Activated CD8-positive, alpha-beta T cell treated with anti-CD3 and anti-CD28 coated beads for 36 hours (primary cell): ENCODE measurements at regions of chrX and their contacts with region 1.

Region 1: GRCh38 chrX:19682712-19683331 is 167.5 kb upstream of the MAP3K15 start:
- DNase-seq: peak; percentile 91
- ATAC-seq: peak; percentile 76
- H3K4me3 Mint-ChIP-seq: peak overlapping the region; percentile 71
- H3K27ac Mint-ChIP-seq: peak overlapping the region; percentile 94
- H3K4me1 Mint-ChIP-seq: peaks cover 85% of the 10 kb centered on the region
- H3K27me3 Mint-ChIP-seq: no peaks in the 10 kb centered on the region
- CTCF ChIP-seq: no peak

Region 2: DNA sequence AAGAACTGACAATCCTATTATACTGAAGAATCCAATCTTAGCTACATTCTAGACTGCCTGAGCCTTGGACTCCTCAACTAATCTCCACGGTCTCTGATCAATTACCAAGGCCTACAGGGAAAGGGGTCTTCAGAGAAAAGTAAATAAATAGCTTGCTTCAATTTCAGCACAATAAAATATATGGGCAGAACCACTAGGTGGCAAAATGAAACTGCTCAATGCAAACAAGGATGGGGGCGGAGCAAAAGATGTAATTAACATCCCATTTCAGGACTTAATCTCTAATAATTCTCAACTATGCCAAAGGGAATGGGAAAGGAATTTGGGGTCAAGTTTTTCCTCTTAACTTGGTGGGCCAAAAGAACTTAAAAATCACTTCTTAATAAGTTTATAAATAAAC is 89.1 kb before region 1 on chrX:
- CTCF ChIA-PET with region 1: interaction called, 3 read pairs
- POLR2A ChIA-PET with region 1: no interaction called
- intact Hi-C with region 1: loop called (anchors 10 kb)
- DNase-seq: peak; percentile 36
- ATAC-seq: peak; percentile 45
- H3K4me3 Mint-ChIP-seq: no peak overlapping the region
- H3K27ac Mint-ChIP-seq: peak overlapping the region; percentile 16
- H3K4me1 Mint-ChIP-seq: peaks cover 13% of the 10 kb centered on the region
- H3K27me3 Mint-ChIP-seq: no peaks in the 10 kb centered on the region
- CTCF ChIP-seq: peak; percentile 61

Region 3: GRCh38 chrX:19698125-19698524 is 15.3 kb after region 1 on chrX:
- CTCF ChIA-PET with region 1: no interaction called
- POLR2A ChIA-PET with region 1: no interaction called
- intact Hi-C with region 1: no loop called
- DNase-seq: no peak
- ATAC-seq: no peak
- H3K4me3 Mint-ChIP-seq: no peak overlapping the region
- H3K27ac Mint-ChIP-seq: no peak overlapping the region
- H3K4me1 Mint-ChIP-seq: peaks cover 57% of the 10 kb centered on the region
- H3K27me3 Mint-ChIP-seq: no peaks in the 10 kb centered on the region
- CTCF ChIP-seq: no peak

Region 4: DNA sequence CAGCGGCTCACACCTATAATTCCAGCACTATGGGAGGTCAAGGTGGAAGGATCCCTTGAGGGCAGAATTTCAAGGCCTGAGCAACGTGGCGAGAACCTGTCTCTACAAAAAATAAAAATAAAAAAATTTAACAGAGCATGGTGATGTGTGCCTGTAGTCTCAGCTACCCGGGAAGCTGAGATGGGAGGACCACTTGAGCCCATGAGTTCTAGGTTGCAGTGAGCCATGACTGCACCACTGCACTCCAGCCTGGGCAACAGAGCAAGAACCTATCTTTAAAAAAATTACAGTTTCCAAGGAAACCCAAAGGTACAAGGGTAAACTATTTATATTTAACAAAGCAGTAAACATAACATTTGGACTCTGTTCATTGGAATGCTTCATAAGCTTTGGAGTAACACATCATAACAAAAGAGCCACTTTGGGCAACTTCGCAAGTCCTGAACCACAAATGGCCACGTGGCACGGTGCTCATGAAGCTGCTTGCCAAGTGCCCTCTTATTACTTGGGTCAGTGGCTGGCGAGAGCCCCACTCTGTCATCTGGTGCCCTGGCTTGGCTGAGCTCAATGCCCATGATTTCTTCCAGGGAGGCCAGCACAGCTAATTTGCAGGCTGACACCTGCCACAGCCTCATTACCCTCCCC is 39.0 kb after region 1 on chrX:
- CTCF ChIA-PET with region 1: no interaction called
- POLR2A ChIA-PET with region 1: no interaction called
- intact Hi-C with region 1: no loop called
- DNase-seq: no peak
- ATAC-seq: no peak
- H3K4me3 Mint-ChIP-seq: no peak overlapping the region
- H3K27ac Mint-ChIP-seq: no peak overlapping the region
- H3K4me1 Mint-ChIP-seq: peaks cover 47% of the 10 kb centered on the region
- H3K27me3 Mint-ChIP-seq: no peaks in the 10 kb centered on the region
- CTCF ChIP-seq: no peak

Region 5: GRCh38 chrX:19739683-19740082 is 56.9 kb after region 1 on chrX:
- CTCF ChIA-PET with region 1: no interaction called
- POLR2A ChIA-PET with region 1: no interaction called
- intact Hi-C with region 1: loop called (anchors 10 kb)
- DNase-seq: peak; percentile 47
- ATAC-seq: peak; percentile 40
- H3K4me3 Mint-ChIP-seq: no peak overlapping the region
- H3K27ac Mint-ChIP-seq: peak overlapping the region; percentile 85
- H3K4me1 Mint-ChIP-seq: peaks cover 75% of the 10 kb centered on the region
- H3K27me3 Mint-ChIP-seq: no peaks in the 10 kb centered on the region
- CTCF ChIP-seq: peak; percentile 58

Region 6: GRCh38 chrX:19747652-19748610 is 65.1 kb after region 1 on chrX:
- CTCF ChIA-PET with region 1: no interaction called
- POLR2A ChIA-PET with region 1: interaction called, 12 read pairs
- intact Hi-C with region 1: loop called (anchors 10 kb)
- DNase-seq: peak; percentile 85
- ATAC-seq: peak; percentile 73
- H3K4me3 Mint-ChIP-seq: peak overlapping the region; percentile 63
- H3K27ac Mint-ChIP-seq: peak overlapping the region; percentile 98
- H3K4me1 Mint-ChIP-seq: peaks cover 94% of the 10 kb centered on the region
- H3K27me3 Mint-ChIP-seq: no peaks in the 10 kb centered on the region
- CTCF ChIP-seq: no peak